Caco-2 (cell line): ENCODE measurements at regions of chr12 and their contacts with region 1.

Region 1: DNA sequence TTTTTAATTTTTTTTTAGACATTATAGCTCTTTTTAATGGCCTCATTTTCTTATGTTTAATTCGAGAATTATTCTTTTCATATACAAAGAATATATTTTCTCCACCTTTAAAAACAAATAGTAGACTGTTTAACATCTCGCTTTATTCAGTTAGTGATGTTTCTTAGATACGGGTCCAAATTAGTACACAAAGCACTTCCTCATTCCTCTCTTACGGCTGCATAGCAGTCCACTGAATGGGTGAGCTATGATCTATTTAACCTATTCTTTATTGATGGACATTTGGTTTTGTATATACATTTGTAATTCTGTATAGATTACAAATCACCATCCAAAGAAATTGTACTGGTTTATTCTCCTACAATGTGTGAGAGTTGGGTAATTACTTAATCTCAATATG is 8.3 kb upstream of the GPR162 start:
- DNase-seq: no peak
- H3K4me3 ChIP-seq: no peak overlapping the region
- H3K4me3 Mint-ChIP-seq: no peak overlapping the region
- H3K27ac Mint-ChIP-seq: no peak overlapping the region
- H3K4me1 ChIP-seq: no peaks in the 10 kb centered on the region; the same call in 1 of the 2 replicates
- H3K4me1 Mint-ChIP-seq: peaks cover 10% of the 10 kb centered on the region
- H3K27me3 ChIP-seq: no peaks in the 10 kb centered on the region
- H3K27me3 Mint-ChIP-seq: no peaks in the 10 kb centered on the region
- CTCF ChIP-seq: no peak

Region 2: GRCh38 chr12:6745741-6746525 is 67.4 kb before region 1 on chr12:
- CTCF ChIA-PET with region 1: no interaction called
- POLR2A ChIA-PET with region 1: no interaction called
- intact Hi-C with region 1: no loop called
- DNase-seq: no peak
- H3K4me3 ChIP-seq: no peak overlapping the region
- H3K4me3 Mint-ChIP-seq: no peak overlapping the region
- H3K27ac Mint-ChIP-seq: no peak overlapping the region
- H3K4me1 ChIP-seq: peaks cover 7% of the 10 kb centered on the region
- H3K4me1 Mint-ChIP-seq: peaks cover 10% of the 10 kb centered on the region
- H3K27me3 ChIP-seq: no peaks in the 10 kb centered on the region
- H3K27me3 Mint-ChIP-seq: no peaks in the 10 kb centered on the region
- CTCF ChIP-seq: no peak

Region 3: GRCh38 chr12:6764011-6764828 is 49.1 kb before region 1 on chr12:
- CTCF ChIA-PET with region 1: interaction called, 12 read pairs
- POLR2A ChIA-PET with region 1: no interaction called
- intact Hi-C with region 1: no loop called
- DNase-seq: peak; percentile 89 to 95
- H3K4me3 ChIP-seq: peak overlapping the region; percentile 10; the same call in 1 of the 2 replicates
- H3K4me3 Mint-ChIP-seq: peak overlapping the region; percentile 71
- H3K27ac Mint-ChIP-seq: peak overlapping the region; percentile 79
- H3K4me1 ChIP-seq: peaks cover 54% of the 10 kb centered on the region
- H3K4me1 Mint-ChIP-seq: peaks cover 53% of the 10 kb centered on the region
- H3K27me3 ChIP-seq: no peaks in the 10 kb centered on the region
- H3K27me3 Mint-ChIP-seq: no peaks in the 10 kb centered on the region
- CTCF ChIP-seq: no peak

Region 4: GRCh38 chr12:6925540-6926279 is 112.3 kb after region 1 on chr12:
- CTCF ChIA-PET with region 1: no interaction called
- POLR2A ChIA-PET with region 1: no interaction called
- intact Hi-C with region 1: no loop called
- DNase-seq: peak in 1 of 2 experiments; percentile 45
- H3K4me3 ChIP-seq: no peak overlapping the region
- H3K4me3 Mint-ChIP-seq: peak overlapping the region; percentile 71
- H3K27ac Mint-ChIP-seq: no peak overlapping the region
- H3K4me1 ChIP-seq: peaks cover 40% of the 10 kb centered on the region
- H3K4me1 Mint-ChIP-seq: peaks cover 55% of the 10 kb centered on the region
- H3K27me3 ChIP-seq: no peaks in the 10 kb centered on the region
- H3K27me3 Mint-ChIP-seq: no peaks in the 10 kb centered on the region
- CTCF ChIP-seq: no peak

Region 5: DNA sequence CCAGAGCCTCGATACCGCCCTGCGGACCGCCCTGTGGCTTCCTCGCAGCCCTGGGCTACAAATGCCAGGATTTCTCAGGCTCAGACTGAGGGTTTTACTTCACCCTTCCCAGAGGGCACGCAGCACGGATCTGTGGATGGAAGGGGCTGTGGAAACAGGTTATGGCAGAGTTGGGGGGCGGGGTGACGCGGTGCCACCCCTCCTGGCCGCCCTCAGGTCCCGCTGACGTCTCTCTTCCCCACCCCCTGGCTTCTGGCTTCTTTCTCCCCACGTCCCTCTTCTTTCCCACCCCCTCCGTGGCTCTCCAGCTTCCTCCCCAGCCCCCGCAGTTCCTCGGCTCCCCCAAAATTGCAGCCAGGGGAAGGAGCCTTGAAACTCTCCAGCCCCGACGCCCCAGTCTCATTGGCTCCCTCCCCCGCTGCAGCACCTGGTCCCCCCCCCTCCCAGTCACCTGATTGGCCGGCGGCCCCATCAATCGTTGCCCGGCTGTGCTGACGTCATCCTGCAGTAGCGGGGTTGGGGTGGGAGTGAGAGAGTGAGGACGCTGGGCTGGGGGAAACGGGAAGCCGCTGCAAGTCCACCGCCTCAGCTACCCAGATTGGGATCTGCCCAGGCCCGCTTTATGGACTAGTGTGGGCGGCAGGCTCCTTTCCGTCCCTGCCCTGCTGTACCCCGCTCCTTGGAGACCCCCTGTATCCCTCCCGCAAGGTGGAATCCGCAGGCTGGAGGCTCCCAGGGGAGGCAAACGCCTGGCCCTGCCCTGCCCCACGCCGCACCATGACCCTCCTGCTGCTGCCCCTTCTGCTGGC is 316.7 kb after region 1 on chr12 and contains the start of gene CLSTN3:
- CTCF ChIA-PET with region 1: no interaction called
- POLR2A ChIA-PET with region 1: no interaction called
- intact Hi-C with region 1: no loop called
- DNase-seq: peak; percentile 94 to 95
- H3K4me3 ChIP-seq: peak within 1 kb of the TSS; percentile 70
- H3K4me3 Mint-ChIP-seq: peak within 1 kb of the TSS; percentile 86
- H3K27ac Mint-ChIP-seq: peak within 1 kb of the TSS; percentile 79
- H3K4me1 ChIP-seq: peaks cover 30% of the 10 kb centered on the region
- H3K4me1 Mint-ChIP-seq: peaks cover 35% of the 10 kb centered on the region
- H3K27me3 ChIP-seq: no peaks in the 10 kb centered on the region
- H3K27me3 Mint-ChIP-seq: no peaks in the 10 kb centered on the region
- CTCF ChIP-seq: no peak
- total RNA-seq, gene CLSTN3: 40.2 and 44.3 TPM in 2 replicates